ENCODE measurements at regions of chr9 and their contacts with region 1.

Region 1: DNA sequence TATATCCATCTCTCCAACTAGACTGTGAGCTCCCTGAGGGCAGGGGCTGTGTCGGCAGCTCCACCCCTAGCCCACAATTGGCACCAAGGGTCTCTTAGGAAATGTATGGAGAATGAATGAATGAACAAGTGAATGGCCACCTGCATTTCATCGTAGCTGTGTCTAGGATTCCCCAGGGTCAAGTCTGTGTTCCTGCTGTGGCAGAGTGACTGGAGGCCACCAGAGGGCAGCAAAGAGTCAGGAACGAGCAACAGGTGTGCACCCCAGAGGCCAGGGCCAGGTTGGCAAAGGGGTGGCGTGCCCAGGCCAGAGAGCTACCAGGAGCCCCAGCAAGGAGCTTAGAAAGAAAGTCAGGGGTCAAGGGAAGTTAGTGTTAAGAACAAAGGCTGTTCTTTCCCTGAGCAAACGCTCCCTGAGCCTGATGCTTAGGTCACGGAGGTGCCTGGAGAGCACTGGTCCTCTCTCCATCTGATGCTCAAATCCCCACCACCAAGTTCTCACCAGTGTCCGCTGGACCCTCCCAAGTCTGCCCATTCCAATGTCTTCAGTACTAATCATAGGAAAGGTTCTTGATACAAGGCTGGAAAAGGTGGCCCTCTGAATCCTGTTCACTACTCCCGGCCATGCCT is 160.7 kb downstream of the PAX5 start:
- DNase-seq: peak; percentile 89
- ATAC-seq: peak; percentile 95
- H3K4me3 Mint-ChIP-seq: no peak overlapping the region
- H3K27ac Mint-ChIP-seq: no peak overlapping the region
- H3K4me1 Mint-ChIP-seq: no peaks in the 10 kb centered on the region
- H3K27me3 Mint-ChIP-seq: peaks cover 2% of the 10 kb centered on the region

Region 2: GRCh38 chr9:36891341-36891959 is 18.1 kb after region 1 on chr9:
- CTCF ChIA-PET with region 1: interaction called, 22 read pairs
- POLR2A ChIA-PET with region 1: no interaction called
- intact Hi-C with region 1: no loop called
- DNase-seq: no peak
- ATAC-seq: no peak
- H3K4me3 Mint-ChIP-seq: no peak overlapping the region
- H3K27ac Mint-ChIP-seq: no peak overlapping the region
- H3K4me1 Mint-ChIP-seq: no peaks in the 10 kb centered on the region
- H3K27me3 Mint-ChIP-seq: peaks cover 4% of the 10 kb centered on the region

Region 3: DNA sequence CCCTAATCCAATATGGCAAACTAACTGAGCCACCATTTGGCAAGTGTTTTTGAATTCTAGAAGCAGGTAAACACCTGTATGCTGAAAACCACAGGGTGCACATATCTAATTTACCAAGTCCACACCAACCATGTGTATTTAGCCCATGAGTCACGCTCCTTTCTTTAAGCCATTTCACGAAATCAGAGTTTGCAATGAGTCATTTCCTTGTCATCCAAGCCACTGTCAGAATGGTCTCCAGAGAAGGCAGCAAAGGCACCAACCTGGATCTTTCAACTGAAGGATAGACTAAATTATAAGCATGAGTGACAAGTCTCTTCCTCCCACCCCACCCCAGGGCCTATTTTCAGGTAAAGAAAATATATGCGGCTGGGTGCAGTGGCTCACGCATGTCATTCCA is 50.7 kb after region 1 on chr9:
- CTCF ChIA-PET with region 1: interaction called, 8 read pairs
- POLR2A ChIA-PET with region 1: no interaction called
- intact Hi-C with region 1: loop called in 1 of 2 experiments (anchors 5 kb)
- DNase-seq: peak; percentile 51
- ATAC-seq: peak; percentile 85
- H3K4me3 Mint-ChIP-seq: no peak overlapping the region
- H3K27ac Mint-ChIP-seq: no peak overlapping the region
- H3K4me1 Mint-ChIP-seq: peaks cover 34% of the 10 kb centered on the region
- H3K27me3 Mint-ChIP-seq: peaks cover 35% of the 10 kb centered on the region

Region 4: GRCh38 chr9:36995927-36996705 is 122.8 kb after region 1 on chr9:
- CTCF ChIA-PET with region 1: interaction called, 92 read pairs
- POLR2A ChIA-PET with region 1: no interaction called
- intact Hi-C with region 1: loop called (anchors 1 kb)
- DNase-seq: peak; percentile 79
- ATAC-seq: peak; percentile 75
- H3K4me3 Mint-ChIP-seq: no peak overlapping the region
- H3K27ac Mint-ChIP-seq: no peak overlapping the region
- H3K4me1 Mint-ChIP-seq: no peaks in the 10 kb centered on the region
- H3K27me3 Mint-ChIP-seq: peaks cover 15% of the 10 kb centered on the region

Region 5: DNA sequence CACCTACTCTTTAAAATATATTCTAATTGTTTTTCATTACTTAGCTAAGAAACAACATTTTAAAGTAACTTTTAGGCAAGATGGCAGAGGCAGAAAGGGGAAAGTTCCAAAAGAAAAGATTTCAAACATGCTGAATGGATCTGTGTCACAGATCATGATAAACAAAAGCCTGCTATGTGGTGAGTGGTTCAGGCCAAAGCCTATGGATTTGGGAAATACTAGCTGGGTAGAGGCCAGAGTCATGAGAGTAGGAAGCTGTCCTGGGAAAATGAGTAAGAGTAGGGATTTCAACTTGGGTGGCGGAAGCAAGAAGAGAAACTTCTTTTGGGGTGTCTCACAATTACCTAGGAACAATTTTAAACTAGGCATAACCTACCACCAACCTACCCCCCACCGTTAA is 480.4 kb after region 1 on chr9:
- CTCF ChIA-PET with region 1: no interaction called
- POLR2A ChIA-PET with region 1: no interaction called
- intact Hi-C with region 1: no loop called
- DNase-seq: no peak
- ATAC-seq: no peak
- H3K4me3 Mint-ChIP-seq: no peak overlapping the region
- H3K27ac Mint-ChIP-seq: no peak overlapping the region
- H3K4me1 Mint-ChIP-seq: no peaks in the 10 kb centered on the region
- H3K27me3 Mint-ChIP-seq: no peaks in the 10 kb centered on the region

Region 6: DNA sequence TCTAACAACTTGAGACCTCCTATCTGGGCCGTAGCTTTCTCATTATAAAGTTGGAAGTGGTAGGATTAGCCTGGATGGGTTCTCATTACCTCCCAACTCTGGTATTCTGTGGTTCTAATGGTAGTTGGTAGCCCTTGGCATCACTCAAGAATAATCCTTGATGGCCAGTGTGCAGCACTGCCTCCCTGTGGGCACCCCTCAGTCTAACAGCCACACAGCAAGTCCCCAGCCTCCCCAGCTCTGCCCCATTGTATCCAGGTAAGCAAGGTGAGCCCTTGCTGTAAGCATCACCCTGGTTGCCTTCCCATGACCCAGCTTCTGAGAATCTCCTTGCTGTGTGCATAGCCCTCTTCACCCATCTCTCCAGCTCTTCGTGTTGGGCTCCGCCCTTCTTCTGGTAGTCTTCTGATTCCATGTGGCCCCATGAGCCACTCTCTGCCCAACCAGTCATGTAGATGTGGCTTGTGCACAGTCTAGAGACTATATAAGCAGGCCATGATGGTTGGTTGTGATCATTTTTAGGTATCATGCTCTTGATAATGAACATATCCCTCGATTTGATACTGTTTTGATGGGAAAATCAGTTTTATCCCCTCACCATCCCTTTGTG is 491.5 kb after region 1 on chr9:
- CTCF ChIA-PET with region 1: interaction called, 3 read pairs
- POLR2A ChIA-PET with region 1: no interaction called
- intact Hi-C with region 1: loop called in 1 of 2 experiments (anchors 10 kb)
- DNase-seq: peak; percentile 56
- ATAC-seq: peak; percentile 73
- H3K4me3 Mint-ChIP-seq: no peak overlapping the region
- H3K27ac Mint-ChIP-seq: no peak overlapping the region
- H3K4me1 Mint-ChIP-seq: no peaks in the 10 kb centered on the region
- H3K27me3 Mint-ChIP-seq: no peaks in the 10 kb centered on the region

Measured in activated CD4-positive, alpha-beta T cell treated with anti-CD3 and anti-CD28 coated beads for 36 hours (primary cell).